GM10248 (cell line): ENCODE measurements at regions of chr19 and their contacts with region 1.

Region 1: DNA sequence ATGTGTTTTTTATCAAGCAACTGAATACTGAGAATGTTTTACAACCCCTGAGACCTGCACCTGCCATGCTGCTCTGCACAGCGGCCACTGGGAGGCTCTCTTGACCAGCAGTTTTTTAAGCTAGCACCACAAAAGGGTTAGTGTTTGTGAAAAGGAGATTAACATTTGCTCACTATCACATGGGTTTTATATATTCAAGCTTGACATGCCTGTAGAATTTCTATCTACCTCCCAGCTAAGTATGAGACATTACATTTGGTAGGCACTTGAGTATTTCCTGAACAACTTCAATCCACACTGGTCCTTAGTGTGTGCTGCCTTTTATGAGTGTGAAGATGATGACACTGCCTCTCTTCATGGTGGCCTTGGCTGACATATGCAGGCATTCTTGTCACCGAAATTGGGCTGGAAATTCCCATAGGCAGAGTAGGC is 1238.9 kb downstream of the UQCRFS1 start:
- DNase-seq: peak; percentile 18
- CTCF ChIP-seq: peak; percentile 73

Region 2: DNA sequence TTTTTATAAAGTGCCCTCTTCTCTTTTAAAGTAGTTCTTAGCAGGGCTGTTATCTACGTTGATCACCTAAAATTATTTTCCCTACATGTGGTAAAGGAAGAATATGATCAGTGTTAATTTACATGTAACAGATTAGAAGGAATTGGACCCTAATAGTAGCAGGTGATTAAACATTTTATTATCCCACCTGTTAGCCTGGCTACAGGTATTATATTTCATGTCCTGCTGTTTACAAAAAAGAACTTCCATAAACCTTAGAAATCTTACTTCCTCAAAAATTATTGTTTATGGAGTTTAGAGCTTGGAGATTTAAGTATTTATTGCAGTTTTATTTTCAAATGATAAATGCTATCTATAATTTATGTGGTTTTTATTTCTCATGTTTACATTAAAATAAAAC is 12.2 kb after region 1 on chr19:
- CTCF ChIA-PET with region 1: interaction called, 13 read pairs
- POLR2A ChIA-PET with region 1: no interaction called
- DNase-seq: no peak
- CTCF ChIP-seq: no peak

Region 3: GRCh38 chr19:28012361-28012760 is 38.3 kb after region 1 on chr19:
- CTCF ChIA-PET with region 1: interaction called, 30 read pairs
- POLR2A ChIA-PET with region 1: no interaction called
- DNase-seq: no peak
- CTCF ChIP-seq: peak; percentile 34

Region 4: DNA sequence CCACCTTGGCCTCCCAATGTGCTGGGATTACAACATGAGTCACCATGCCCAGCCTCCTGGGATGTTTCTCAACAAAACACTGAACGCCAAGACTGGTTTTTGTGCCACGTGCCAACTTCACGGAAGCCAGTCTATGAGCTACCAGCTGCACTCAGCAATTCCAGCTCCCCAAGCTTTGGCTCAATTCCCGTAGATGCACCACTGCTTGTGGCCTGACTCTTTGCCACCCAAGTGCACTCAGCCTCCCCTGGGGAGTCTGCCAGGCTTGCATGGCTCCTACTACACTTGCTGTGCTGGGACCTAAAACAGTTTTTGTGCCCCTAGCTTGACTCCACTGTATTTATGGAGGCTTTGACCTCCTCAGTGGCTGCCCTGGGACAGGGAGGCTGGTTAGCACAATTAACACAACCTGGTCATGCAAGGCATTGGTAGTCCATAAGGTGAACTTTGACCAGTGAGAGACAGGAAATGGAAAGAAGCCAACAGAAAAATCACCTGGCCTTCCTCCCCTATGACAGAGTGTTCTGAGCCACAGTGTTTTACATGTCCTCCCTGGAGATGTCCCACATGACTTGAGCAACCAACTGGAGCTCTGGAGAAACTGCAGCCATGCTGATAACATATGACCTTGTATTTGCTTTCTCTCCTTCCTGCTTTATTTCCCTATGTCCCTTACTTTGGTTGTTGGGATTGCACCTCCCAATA is 65.7 kb after region 1 on chr19:
- CTCF ChIA-PET with region 1: no interaction called
- POLR2A ChIA-PET with region 1: no interaction called
- DNase-seq: no peak
- CTCF ChIP-seq: no peak

Region 5: DNA sequence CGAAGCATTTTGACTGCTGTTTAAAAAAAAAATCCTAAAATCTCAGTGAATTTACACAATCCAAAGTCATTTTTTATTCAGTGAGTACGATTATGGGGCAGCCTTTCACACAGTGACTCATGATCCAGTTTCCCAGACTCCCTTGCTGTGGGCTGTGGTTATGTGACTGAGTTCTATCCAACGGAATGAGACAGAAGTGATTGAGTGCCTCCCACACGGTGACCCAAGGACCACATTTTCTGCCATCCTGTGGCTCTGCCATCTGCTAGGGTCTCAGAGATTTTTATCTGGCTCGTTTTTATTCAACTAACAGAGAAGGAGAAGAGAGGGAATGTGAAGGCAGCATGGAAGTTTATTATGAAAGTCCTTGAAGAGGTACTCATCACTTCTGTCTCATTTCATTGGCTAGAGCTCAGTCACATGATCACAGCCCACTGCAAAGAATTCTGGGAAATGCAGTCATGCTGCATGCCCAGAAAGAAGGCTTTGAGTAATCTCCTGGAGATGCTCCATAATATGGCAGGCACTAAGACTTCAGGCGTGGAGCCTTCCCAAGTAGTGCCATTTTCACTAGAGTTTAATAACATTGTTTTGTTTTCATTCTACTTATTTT is 239.5 kb after region 1 on chr19:
- CTCF ChIA-PET with region 1: interaction called, 37 read pairs
- POLR2A ChIA-PET with region 1: no interaction called
- DNase-seq: no peak
- CTCF ChIP-seq: no peak

Region 6: DNA sequence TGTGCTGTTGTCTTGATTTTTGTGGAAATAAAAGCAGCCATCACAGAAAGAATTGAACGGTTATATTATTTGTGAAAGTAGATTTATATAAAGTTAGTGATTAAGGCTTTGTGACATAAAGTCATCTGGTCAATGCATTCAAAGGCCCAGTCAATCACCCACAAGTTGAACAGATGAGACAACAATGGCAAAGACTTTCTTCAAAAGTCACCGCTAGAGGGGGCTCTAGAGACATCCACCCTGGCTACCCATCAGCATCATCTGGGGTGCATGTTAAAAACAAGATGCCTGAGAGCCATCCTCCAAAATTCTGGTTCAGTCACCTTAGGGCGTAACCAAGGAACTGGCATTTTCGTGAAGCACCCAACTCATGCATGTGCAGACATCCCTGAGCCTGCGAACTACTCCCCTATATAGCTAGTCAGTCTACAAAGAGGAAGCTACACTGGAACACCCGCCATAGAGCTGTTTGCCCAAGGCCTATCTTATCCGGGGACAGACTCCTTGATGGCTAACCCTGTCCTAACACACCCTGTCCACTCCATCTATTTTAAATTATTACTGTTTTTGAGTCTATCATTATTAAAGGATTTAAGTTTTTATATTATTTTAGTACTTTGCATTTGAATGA is 268.3 kb after region 1 on chr19:
- CTCF ChIA-PET with region 1: interaction called, 15 read pairs
- POLR2A ChIA-PET with region 1: no interaction called
- DNase-seq: peak; percentile 24
- CTCF ChIP-seq: peak; percentile 21

Region 7: DNA sequence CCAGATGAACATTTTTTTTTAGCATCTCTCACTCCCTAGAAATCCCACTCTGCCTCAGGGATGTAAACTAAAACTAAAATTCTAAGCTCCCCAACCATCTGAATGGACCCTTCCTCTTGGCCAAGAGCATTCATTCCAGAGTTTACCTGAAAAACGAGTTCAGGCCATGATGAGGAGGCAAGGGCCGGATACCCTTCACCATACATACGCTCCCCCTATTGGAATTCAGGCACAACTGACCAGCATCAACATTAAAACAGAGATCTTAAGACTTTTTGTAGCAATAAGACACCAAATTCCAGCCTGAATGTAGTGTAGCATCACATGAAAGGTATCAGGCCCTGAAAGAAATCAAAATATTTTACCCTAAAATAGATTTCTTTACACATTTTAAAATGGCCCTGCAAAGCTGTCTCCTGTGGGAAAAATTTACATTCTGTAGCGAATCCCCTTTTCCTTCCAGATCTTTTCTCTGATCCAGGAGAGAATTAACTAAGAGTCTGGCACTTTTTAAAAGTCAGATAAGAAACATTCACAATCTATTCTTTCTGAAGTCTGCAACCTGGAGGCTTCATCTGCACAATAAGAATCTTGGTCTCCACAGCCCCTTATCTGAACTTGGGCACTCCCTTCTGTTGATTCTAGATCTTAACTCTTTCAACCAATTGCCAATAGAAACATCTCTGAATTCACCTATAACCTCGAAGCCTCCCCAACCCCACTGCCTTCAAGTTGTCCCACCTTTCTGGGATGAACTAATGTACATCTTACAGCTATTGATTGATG is 350.4 kb after region 1 on chr19:
- CTCF ChIA-PET with region 1: interaction called, 97 read pairs
- POLR2A ChIA-PET with region 1: no interaction called
- DNase-seq: no peak
- CTCF ChIP-seq: no peak